GM12878 (cell line): ENCODE measurements at regions of chr10 and their contacts with region 1.

Region 1: DNA sequence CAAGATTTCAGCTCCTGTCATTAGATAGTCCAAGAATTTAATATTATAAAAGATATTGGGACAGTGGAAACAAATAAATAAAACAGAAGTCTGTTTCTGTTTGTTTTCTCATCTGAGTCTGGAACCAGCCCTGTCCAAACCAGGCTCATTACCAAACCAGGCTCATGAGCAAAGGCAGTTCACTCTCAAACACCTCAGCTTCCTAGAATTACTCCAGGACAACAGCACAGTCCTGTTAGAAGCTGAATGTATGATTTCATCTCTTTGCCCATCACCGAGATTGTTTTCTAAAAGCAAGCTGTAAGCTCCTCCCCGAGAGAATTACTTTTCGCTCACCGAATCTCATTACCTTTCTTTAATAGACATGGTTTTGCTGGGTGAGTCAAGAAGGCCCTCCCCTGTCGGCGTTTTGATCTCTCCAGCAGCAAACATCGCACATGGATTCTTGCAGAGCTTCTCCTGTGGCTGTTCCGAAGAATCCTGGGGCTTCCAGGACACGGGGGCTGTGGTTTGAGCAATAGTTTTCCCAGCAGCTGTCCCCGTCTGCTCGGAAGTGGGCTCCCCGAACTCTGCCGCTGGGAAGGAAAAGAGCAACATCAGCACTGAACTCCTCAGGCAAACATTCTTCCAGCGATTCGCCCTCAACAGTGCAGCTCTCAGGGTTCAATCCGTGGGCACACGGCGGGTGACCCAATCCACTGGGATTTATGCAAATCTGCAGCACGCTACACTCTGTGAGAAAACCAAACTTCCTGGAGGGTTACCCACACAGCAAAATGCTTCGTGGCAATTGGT is 112.5 kb downstream of the SVIL start:
- DNase-seq: no peak
- ATAC-seq: no peak
- H3K4me3 ChIP-seq: no peak overlapping the region
- H3K27ac ChIP-seq: no peak overlapping the region
- H3K4me1 ChIP-seq: no peaks in the 10 kb centered on the region
- H3K27me3 ChIP-seq: no peaks in the 10 kb centered on the region
- CTCF ChIP-seq: no peak
- EP300 ChIP-seq: no peak
- POLR2A ChIP-seq: no peak
- RAD21 ChIP-seq: no peak

Region 2: GRCh38 chr10:29508554-29509244 is 13.6 kb before region 1 on chr10:
- CTCF ChIA-PET with region 1: interaction called, 32 read pairs
- POLR2A ChIA-PET with region 1: no interaction called
- RAD21 ChIA-PET with region 1: no interaction called
- SMC1A ChIA-PET with region 1: no interaction called
- in situ Hi-C with region 1: no loop called
- intact Hi-C with region 1: no loop called
- DNase-seq: no peak
- ATAC-seq: no peak; the same call in 2 of the 3 replicates
- H3K4me3 ChIP-seq: no peak overlapping the region
- H3K27ac ChIP-seq: no peak overlapping the region
- H3K4me1 ChIP-seq: no peaks in the 10 kb centered on the region
- H3K27me3 ChIP-seq: no peaks in the 10 kb centered on the region
- CTCF ChIP-seq: no peak
- EP300 ChIP-seq: no peak
- POLR2A ChIP-seq: no peak
- RAD21 ChIP-seq: no peak

Region 3: GRCh38 chr10:29535012-29535777 is 12.9 kb after region 1 on chr10:
- CTCF ChIA-PET with region 1: interaction called, 14 read pairs
- POLR2A ChIA-PET with region 1: no interaction called
- RAD21 ChIA-PET with region 1: no interaction called
- SMC1A ChIA-PET with region 1: interaction called, 4 read pairs
- in situ Hi-C with region 1: no loop called
- intact Hi-C with region 1: no loop called
- DNase-seq: no peak
- ATAC-seq: peak; percentile 46
- H3K4me3 ChIP-seq: no peak overlapping the region
- H3K27ac ChIP-seq: no peak overlapping the region
- H3K4me1 ChIP-seq: no peaks in the 10 kb centered on the region
- H3K27me3 ChIP-seq: no peaks in the 10 kb centered on the region
- CTCF ChIP-seq: peak; percentile 24 to 40 (median 25); a peak in 4 of 6 replicates
- EP300 ChIP-seq: no peak
- POLR2A ChIP-seq: no peak
- RAD21 ChIP-seq: no peak

Region 4: DNA sequence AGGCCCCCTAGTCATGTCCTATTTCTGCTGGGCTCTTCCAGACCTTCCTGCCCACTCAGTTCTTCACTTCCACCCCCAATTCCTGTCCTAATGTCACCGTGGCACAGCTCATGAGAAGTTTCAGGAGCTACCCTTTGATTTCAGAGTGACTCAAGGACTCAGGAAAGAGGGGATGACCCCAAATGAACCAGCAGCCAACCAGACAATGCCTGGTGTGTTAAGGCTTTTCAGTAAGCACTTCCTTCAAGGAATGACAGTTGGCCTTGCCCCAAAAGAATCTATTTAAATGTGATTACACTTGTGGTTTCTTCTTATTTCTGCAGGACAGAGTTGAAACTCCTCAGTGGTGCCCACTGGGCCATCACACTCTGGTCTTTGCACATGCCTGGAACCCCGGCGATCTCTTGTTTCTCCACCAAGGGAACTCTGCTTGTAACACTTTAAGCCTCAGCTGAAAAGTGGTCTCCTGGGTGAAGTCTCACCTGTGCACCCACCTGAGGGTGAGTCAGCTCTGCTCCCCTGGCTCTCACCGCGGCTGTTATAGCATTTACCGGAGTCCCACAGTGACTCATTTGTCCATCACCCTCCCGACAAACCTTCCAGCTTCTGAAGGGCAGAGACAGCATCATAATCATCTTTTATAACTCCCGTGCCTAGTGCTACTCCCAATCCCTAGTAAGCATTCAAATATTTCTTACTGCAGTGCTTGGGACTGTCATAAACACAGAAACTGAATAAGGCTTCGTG is 235.5 kb after region 1 on chr10:
- CTCF ChIA-PET with region 1: no interaction called
- POLR2A ChIA-PET with region 1: no interaction called
- RAD21 ChIA-PET with region 1: no interaction called
- SMC1A ChIA-PET with region 1: no interaction called
- in situ Hi-C with region 1: no loop called
- intact Hi-C with region 1: no loop called
- DNase-seq: no peak
- ATAC-seq: no peak; the same call in 2 of the 3 replicates
- H3K4me3 ChIP-seq: no peak overlapping the region
- H3K27ac ChIP-seq: no peak overlapping the region
- H3K4me1 ChIP-seq: no peaks in the 10 kb centered on the region
- H3K27me3 ChIP-seq: no peaks in the 10 kb centered on the region; a peak in 1 of 4 replicates
- CTCF ChIP-seq: no peak
- EP300 ChIP-seq: no peak
- POLR2A ChIP-seq: no peak
- RAD21 ChIP-seq: no peak